ENCODE measurements at regions of chr1 and their contacts with region 1.

Region 1: DNA sequence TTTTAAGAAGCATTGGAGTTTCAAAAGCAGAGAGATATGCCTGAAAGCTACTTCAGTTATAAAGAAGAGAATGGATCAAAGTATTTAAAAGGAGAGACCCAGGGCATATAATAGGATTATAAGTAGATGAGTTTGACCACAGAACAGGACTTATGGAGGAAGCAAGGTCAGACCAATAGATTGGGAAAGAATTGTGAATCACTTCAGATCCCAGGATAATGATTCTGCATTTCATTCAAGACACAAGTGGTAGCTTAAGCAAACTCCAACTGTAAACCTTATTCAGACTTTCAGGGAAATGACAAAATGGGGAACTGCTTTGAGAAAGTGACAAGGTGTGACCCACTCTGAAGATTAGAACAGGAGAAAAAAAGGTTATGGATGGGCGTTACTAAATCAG is 18.9 kb upstream of the OR10J5 start:
- DNase-seq: peak; percentile 18
- H3K4me3 Mint-ChIP-seq: no peak overlapping the region
- H3K27ac Mint-ChIP-seq: peak overlapping the region; percentile 4
- H3K4me1 Mint-ChIP-seq: no peaks in the 10 kb centered on the region
- H3K27me3 Mint-ChIP-seq: no peaks in the 10 kb centered on the region
- CTCF ChIP-seq: no peak

Region 2: DNA sequence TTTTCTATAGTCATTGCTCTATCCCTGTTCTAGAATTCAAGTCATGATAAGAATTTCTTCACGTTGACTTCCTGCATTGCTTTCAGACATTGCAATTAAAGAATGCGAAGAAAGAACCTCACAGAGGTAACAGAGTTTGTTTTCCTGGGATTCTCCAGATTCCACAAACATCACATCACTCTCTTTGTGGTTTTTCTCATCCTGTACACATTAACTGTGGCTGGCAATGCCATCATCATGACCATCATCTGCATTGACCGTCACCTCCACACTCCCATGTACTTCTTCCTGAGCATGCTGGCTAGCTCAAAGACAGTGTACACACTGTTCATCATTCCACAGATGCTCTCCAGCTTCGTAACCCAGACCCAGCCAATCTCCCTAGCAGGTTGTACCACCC is 43.5 kb after region 1 on chr1:
- CTCF ChIA-PET with region 1: no interaction called
- POLR2A ChIA-PET with region 1: no interaction called
- intact Hi-C with region 1: loop called (anchors 5 kb)
- DNase-seq: peak; percentile 91
- H3K4me3 Mint-ChIP-seq: peak overlapping the region; percentile 2
- H3K27ac Mint-ChIP-seq: peak overlapping the region; percentile 75
- H3K4me1 Mint-ChIP-seq: peaks cover 66% of the 10 kb centered on the region
- H3K27me3 Mint-ChIP-seq: no peaks in the 10 kb centered on the region
- CTCF ChIP-seq: no peak

Region 3: GRCh38 chr1:159700312-159700711 is 145.6 kb after region 1 on chr1:
- CTCF ChIA-PET with region 1: no interaction called
- POLR2A ChIA-PET with region 1: no interaction called
- intact Hi-C with region 1: no loop called
- DNase-seq: no peak
- H3K4me3 Mint-ChIP-seq: no peak overlapping the region
- H3K27ac Mint-ChIP-seq: no peak overlapping the region
- H3K4me1 Mint-ChIP-seq: peaks cover 8% of the 10 kb centered on the region
- H3K27me3 Mint-ChIP-seq: no peaks in the 10 kb centered on the region
- CTCF ChIP-seq: no peak